ENCODE measurements at regions of chr13 and their contacts with region 1.

Region 1: GRCh38 chr13:113458253-113459065 is 5.2 kb upstream of the ADPRHL1 start:
- DNase-seq: no peak
- H3K4me3 ChIP-seq: no peak overlapping the region
- H3K27ac ChIP-seq: no peak overlapping the region
- H3K4me1 ChIP-seq: no peaks in the 10 kb centered on the region
- H3K27me3 ChIP-seq: no peaks in the 10 kb centered on the region
- CTCF ChIP-seq: no peak
- POLR2A ChIP-seq: no peak

Region 2: DNA sequence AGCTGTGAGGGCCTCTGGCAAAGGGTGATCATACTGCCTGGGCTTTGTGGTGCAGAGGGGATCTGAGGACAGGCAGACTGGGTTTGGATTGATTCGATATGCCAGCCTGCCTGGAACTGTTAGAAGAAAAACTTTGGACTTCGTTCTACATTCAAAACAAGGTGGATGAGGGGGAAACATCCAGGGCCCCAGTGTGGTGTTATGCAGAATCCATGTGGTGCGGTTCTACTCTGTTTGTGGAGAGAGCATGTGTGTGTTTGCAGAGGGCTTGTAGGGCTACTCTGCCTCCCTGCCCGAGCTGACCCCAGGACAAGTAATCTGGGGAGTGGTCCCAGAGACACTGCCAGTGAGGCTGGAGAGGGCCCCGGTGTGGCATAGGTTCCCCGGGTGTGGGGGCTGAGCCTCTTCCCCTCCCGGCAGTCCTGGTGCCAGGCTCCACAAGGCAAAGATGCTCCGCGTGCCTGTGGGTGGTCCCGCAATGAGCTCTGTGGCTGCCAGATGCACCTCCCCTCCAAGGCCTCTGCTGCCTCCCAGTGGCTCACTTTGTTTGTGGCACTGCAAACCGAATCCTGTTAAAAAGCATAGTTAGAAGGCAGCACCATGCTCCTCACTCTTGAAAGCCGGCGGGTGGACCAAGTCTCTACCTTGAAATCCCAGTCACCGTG is 103.8 kb after region 1 on chr13:
- intact Hi-C with region 1: loop called (anchors 5 kb)
- DNase-seq: peak; percentile 36
- H3K4me3 ChIP-seq: no peak overlapping the region
- H3K27ac ChIP-seq: no peak overlapping the region
- H3K4me1 ChIP-seq: no peaks in the 10 kb centered on the region
- H3K27me3 ChIP-seq: no peaks in the 10 kb centered on the region
- CTCF ChIP-seq: peak in 3 of 4 experiments; percentile 52 to 70 (median 61)
- POLR2A ChIP-seq: no peak